GM12878 (cell line): ENCODE measurements at regions of chr4 and their contacts with region 1.

Region 1: DNA sequence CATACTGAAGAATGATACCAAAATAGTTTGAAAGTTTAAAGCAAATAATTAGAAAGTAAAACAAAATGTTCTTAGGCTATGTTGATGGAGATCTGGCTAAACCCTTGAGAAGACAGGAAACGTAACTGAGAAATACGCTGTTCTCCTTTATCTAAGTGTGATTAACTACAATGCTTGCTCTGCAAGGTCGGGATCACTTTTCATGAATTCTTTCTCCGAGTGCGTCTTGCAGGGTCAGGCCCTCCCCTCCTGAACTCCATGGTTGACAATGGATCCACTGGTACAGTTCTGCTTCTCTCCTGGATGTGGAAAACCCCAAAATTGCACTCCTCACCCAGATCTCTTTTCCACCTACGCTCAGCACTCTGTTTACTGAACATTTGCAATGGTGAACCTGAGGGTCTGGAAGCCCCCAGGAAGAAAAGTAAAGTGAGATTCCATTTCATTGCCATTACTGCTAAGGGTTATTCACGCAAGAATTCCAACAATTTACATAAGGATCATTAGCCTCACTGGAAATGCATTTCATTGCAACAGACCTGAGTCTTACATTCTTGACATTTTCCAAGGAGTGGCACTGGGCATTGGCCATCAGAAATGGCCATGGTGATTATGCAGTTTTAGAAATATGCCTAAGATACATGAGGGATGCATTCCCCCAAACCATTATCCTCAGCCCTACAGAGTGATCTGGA is 24.6 kb upstream of the WWC2 start:
- DNase-seq: no peak
- ATAC-seq: no peak
- H3K4me3 ChIP-seq: no peak overlapping the region
- H3K27ac ChIP-seq: no peak overlapping the region
- H3K4me1 ChIP-seq: no peaks in the 10 kb centered on the region
- H3K27me3 ChIP-seq: no peaks in the 10 kb centered on the region
- CTCF ChIP-seq: no peak
- EP300 ChIP-seq: no peak
- POLR2A ChIP-seq: no peak
- RAD21 ChIP-seq: no peak

Region 2: DNA sequence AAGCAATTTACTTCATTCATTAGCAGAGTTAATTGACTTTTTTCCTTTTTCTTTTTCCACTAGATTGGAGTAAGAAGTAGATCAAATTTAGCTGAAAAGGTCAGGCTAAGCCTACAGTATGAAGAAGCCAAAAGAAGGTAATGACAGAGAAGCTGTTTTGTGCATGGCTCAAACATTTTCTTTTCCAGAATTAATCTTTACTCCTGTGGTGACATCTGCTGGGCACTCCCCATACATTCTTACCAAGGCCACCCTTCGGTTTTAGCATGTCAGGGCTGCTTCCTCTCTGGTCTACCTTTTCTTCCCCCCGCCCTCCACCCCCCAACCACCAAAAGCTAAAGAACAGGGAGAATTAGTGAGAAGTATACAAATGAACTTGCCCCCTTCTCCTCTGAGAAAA is 175.4 kb after region 1 on chr4:
- CTCF ChIA-PET with region 1: interaction called, 42 read pairs
- POLR2A ChIA-PET with region 1: no interaction called
- RAD21 ChIA-PET with region 1: interaction called, 4 read pairs
- SMC1A ChIA-PET with region 1: interaction called, 24 read pairs
- in situ Hi-C with region 1: loop called (anchors 5 kb)
- intact Hi-C with region 1: no loop called
- DNase-seq: no peak
- ATAC-seq: peak; percentile 65
- H3K4me3 ChIP-seq: no peak overlapping the region
- H3K27ac ChIP-seq: no peak overlapping the region
- H3K4me1 ChIP-seq: no peaks in the 10 kb centered on the region
- H3K27me3 ChIP-seq: peaks cover 0 to 2% of the 10 kb centered on the region in 2 experiments; a peak in 1 of 4 replicates
- CTCF ChIP-seq: peak in 2 of 3 experiments; percentile 4 to 46; a peak in 2 of 6 replicates
- EP300 ChIP-seq: no peak
- POLR2A ChIP-seq: no peak
- RAD21 ChIP-seq: peak; percentile 55; the same call in 1 of the 2 replicates

Region 3: GRCh38 chr4:183256756-183257385 is 182.4 kb after region 1 on chr4:
- CTCF ChIA-PET with region 1: interaction called, 42 read pairs
- POLR2A ChIA-PET with region 1: no interaction called
- RAD21 ChIA-PET with region 1: interaction called, 8 read pairs
- SMC1A ChIA-PET with region 1: interaction called, 23 read pairs
- in situ Hi-C with region 1: loop called (anchors 5 kb)
- intact Hi-C with region 1: loop called (anchors 1 kb)
- DNase-seq: no peak
- ATAC-seq: peak; percentile 96
- H3K4me3 ChIP-seq: no peak overlapping the region
- H3K27ac ChIP-seq: no peak overlapping the region
- H3K4me1 ChIP-seq: no peaks in the 10 kb centered on the region
- H3K27me3 ChIP-seq: no peaks in the 10 kb centered on the region; a peak in 1 of 4 replicates
- CTCF ChIP-seq: peak; percentile 69 to 85 (median 72)
- EP300 ChIP-seq: no peak
- POLR2A ChIP-seq: no peak
- RAD21 ChIP-seq: peak; percentile 68

Region 4: GRCh38 chr4:183407128-183407585 is 332.7 kb after region 1 on chr4:
- CTCF ChIA-PET with region 1: interaction called, 5 read pairs
- POLR2A ChIA-PET with region 1: no interaction called
- RAD21 ChIA-PET with region 1: interaction called, 6 read pairs
- SMC1A ChIA-PET with region 1: interaction called, 4 read pairs
- in situ Hi-C with region 1: loop called (anchors 10 kb)
- intact Hi-C with region 1: loop called (anchors 10 kb)
- DNase-seq: peak; percentile 19
- ATAC-seq: peak; percentile 98
- H3K4me3 ChIP-seq: peak overlapping the region; percentile 64
- H3K27ac ChIP-seq: no peak overlapping the region
- H3K4me1 ChIP-seq: no peaks in the 10 kb centered on the region
- H3K27me3 ChIP-seq: no peaks in the 10 kb centered on the region; a peak in 1 of 4 replicates
- CTCF ChIP-seq: peak; percentile 88 to 94 (median 89)
- EP300 ChIP-seq: no peak
- POLR2A ChIP-seq: no peak
- RAD21 ChIP-seq: peak; percentile 72